ENCODE measurements at regions of chr7 and their contacts with region 1.

Region 1: DNA sequence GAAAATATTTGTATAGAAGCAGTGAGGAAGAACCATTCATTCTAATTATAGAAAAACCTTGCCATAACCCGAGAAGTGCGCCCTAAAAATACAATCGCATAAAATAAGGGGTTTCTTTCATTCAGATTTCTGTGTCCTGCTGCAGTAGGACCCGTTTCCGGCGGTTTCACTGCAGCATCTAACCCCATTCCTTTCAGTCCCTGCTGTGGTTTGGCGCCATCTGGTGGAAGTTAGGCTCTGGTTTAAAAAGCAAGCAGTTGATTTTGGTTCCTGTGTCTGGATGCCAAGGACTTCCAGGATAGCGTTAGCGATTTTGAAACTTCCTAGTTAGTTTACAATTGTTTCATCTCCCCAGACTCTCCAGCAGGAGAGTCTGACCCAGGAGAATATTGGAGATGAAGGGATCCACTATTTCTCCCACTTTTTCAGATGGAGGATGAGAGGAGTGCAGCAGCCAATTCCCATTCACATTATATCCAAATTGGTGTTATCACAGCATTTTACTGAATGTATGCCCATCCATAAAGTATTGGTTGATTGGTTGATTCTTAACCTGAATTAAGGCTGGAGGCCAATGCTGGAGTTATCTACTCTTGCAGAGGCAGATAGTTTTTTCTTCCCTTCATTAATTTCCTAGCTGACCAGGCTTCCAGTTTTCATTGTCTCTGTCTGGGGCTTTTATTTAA is 128.8 kb upstream of the CACNA2D1 start:
- DNase-seq: peak; percentile 85 to 95 (median 90)
- H3K4me3 ChIP-seq: no peak overlapping the region
- H3K27ac ChIP-seq: no peak overlapping the region
- H3K4me1 ChIP-seq: no peaks in the 10 kb centered on the region
- H3K27me3 ChIP-seq: no peaks in the 10 kb centered on the region
- CTCF ChIP-seq: peak; percentile 77 to 95 (median 88)
- POLR2A ChIP-seq: no peak

Region 2: GRCh38 chr7:81482600-81483186 is 1089.6 kb before region 1 on chr7:
- intact Hi-C with region 1: loop called in 1 of 2 experiments (anchors 10 kb)
- DNase-seq: no peak
- H3K4me3 ChIP-seq: no peak overlapping the region
- H3K27ac ChIP-seq: no peak overlapping the region
- H3K4me1 ChIP-seq: peaks cover 0 to 3% of the 10 kb centered on the region in 2 donors
- H3K27me3 ChIP-seq: no peaks in the 10 kb centered on the region
- CTCF ChIP-seq: peak; percentile 53 to 81 (median 68)
- POLR2A ChIP-seq: no peak

Region 3: GRCh38 chr7:82044497-82045080 is 527.7 kb before region 1 on chr7:
- intact Hi-C with region 1: loop called in 1 of 2 experiments (anchors 10 kb)
- DNase-seq: peak; percentile 41 to 80 (median 51)
- H3K4me3 ChIP-seq: no peak overlapping the region
- H3K27ac ChIP-seq: no peak overlapping the region
- H3K4me1 ChIP-seq: peaks cover 0 to 25% of the 10 kb centered on the region in 2 donors
- H3K27me3 ChIP-seq: no peaks in the 10 kb centered on the region
- CTCF ChIP-seq: peak; percentile 76 to 90 (median 78)
- POLR2A ChIP-seq: no peak

Region 4: DNA sequence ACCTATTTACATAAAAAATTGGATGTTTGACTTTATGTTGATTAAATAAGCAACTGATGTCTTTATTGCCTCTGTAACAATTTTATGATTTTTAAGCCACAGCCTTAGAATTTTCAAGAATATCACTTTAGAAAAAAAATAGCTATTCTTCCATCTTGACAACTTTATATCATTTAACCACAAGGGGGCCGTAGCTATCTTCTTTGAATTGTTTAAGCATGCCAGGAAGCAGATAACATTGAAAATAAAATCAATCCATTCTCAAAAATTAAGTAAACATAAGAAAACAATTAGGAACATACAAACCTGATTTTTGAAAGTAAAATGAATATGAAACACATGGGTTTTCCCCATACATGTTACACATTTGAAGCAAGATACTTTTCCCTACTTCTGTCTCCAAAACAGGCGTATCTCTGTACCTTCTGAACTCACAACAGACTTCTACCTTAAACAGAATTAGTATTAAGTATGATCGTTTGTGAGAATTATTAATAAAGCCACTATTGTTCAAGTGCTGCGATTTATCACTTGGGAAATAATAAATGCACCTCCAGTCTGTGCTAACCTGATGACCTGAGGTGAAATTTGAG is 337.8 kb before region 1 on chr7:
- intact Hi-C with region 1: loop called in 1 of 2 experiments (anchors 10 kb)
- DNase-seq: no peak
- H3K4me3 ChIP-seq: no peak overlapping the region
- H3K27ac ChIP-seq: no peak overlapping the region
- H3K4me1 ChIP-seq: no peaks in the 10 kb centered on the region
- H3K27me3 ChIP-seq: no peaks in the 10 kb centered on the region
- CTCF ChIP-seq: peak; percentile 48 to 74 (median 63)
- POLR2A ChIP-seq: no peak

Region 5: GRCh38 chr7:82291931-82292330 is 280.4 kb before region 1 on chr7:
- intact Hi-C with region 1: no loop called
- DNase-seq: no peak
- H3K4me3 ChIP-seq: no peak overlapping the region
- H3K27ac ChIP-seq: no peak overlapping the region
- H3K4me1 ChIP-seq: peaks cover 23 to 40% of the 10 kb centered on the region in 2 donors
- H3K27me3 ChIP-seq: no peaks in the 10 kb centered on the region
- CTCF ChIP-seq: no peak
- POLR2A ChIP-seq: no peak

Region 6: DNA sequence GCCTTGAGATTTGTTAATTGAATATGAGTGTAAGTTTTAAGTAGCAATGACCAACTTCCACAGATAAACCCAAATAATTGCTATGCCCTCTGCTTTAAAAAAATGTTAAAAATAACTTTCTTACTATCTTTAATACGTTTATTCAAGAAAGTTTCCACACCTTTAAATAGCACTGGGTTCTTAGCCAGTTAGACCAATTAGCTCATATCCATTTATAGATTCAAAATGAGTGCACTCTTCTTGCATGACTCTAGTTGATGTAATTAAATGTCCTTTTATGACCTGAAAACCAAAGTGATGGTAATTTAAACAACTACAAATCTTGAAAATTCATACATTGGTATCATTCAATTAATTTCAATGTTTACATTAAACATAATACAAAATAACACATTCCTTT is 77.9 kb before region 1 on chr7:
- intact Hi-C with region 1: no loop called
- DNase-seq: no peak
- H3K4me3 ChIP-seq: no peak overlapping the region
- H3K27ac ChIP-seq: no peak overlapping the region
- H3K4me1 ChIP-seq: no peaks in the 10 kb centered on the region
- H3K27me3 ChIP-seq: no peaks in the 10 kb centered on the region
- CTCF ChIP-seq: no peak
- POLR2A ChIP-seq: no peak